ENCODE measurements at regions of chr12 and their contacts with region 1.

Region 1: DNA sequence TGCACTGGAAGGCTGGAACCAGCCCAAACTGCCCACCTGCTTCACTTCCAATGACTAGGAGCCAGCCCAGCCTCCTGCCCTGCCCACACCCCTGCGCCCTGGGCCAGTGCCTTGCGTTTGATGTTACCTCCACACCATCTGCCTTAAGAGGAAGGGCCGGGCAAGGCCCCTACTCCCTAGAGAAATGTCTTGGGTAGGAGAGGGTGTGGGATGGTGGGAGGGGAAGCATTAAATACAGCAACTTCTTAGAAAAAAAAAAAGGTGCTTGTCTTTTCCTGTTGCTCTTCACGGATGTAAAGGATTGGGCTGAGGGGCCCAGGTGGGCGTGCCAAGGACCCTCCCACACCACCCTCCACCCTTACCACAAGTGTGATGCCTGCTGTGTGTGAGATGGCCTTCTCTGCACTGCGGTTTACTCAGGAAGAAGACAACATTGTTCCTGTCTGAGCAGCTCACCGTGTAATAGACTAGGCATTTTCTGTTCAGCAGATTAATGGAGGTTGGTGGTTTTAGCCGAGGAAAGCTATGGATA is 99.9 kb downstream of the NINJ2 start:
- DNase-seq: peak in 8 of 9 donors; percentile 54 to 89 (median 85)
- ATAC-seq: peak; percentile 91
- H3K4me3 ChIP-seq: peak overlapping the region; percentile 49
- H3K4me3 Mint-ChIP-seq: peak overlapping the region; percentile 73 to 98 (median 85)
- H3K27ac ChIP-seq: peak overlapping the region; percentile 80
- H3K27ac Mint-ChIP-seq: peak overlapping the region; percentile 84 to 96 (median 94)
- H3K4me1 ChIP-seq: peaks cover 49 to 71% of the 10 kb centered on the region in 2 donors
- H3K4me1 Mint-ChIP-seq: peaks cover 60 to 98% (median 92%) of the 10 kb centered on the region in 7 donors
- H3K27me3 ChIP-seq: no peaks in the 10 kb centered on the region
- H3K27me3 Mint-ChIP-seq: no peaks in the 10 kb centered on the region

Region 2: DNA sequence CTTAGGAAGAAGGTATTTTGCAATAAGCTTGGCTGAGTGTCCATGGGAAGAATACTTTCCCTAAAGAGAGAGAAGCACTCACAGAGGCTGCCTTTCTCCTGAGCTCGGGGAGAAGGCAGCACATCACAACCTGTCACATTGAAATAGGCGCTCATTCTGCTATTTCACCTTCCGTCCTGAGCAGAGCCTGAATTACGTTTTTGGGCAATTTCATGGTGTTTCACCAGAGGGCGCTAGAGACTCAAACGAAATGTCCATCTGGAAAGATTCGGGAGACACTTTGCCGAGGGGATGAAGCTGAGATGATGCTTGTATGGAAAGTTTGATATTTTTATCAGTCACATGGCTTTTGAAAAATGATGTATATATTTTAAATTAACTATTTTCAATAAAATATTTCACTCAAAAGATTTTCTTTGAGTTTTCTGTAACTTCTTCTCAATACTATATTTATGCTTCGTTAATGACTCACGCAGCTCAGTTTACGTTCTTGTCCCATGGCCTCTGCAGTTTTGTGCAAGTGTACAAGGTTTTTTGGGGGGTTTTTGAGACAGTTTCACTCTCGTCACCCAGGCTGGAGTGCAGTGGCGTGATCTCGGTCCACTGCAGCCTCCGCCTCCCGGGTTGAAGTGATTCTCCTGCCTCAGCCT is 121.0 kb before region 1 on chr12:
- CTCF ChIA-PET with region 1: no interaction called
- POLR2A ChIA-PET with region 1: no interaction called
- intact Hi-C with region 1: no loop called
- DNase-seq: peak in 7 of 9 donors; percentile 24 to 46 (median 38)
- ATAC-seq: peak; percentile 45
- H3K4me3 ChIP-seq: no peak overlapping the region
- H3K4me3 Mint-ChIP-seq: no peak overlapping the region
- H3K27ac ChIP-seq: no peak overlapping the region
- H3K27ac Mint-ChIP-seq: no peak overlapping the region
- H3K4me1 ChIP-seq: no peaks in the 10 kb centered on the region
- H3K4me1 Mint-ChIP-seq: no peaks in the 10 kb centered on the region
- H3K27me3 ChIP-seq: no peaks in the 10 kb centered on the region
- H3K27me3 Mint-ChIP-seq: peaks cover 0 to 4% (median 0%) of the 10 kb centered on the region in 5 donors

Region 3: GRCh38 chr12:480831-481816 is 82.2 kb before region 1 on chr12:
- CTCF ChIA-PET with region 1: no interaction called
- POLR2A ChIA-PET with region 1: no interaction called
- intact Hi-C with region 1: no loop called
- DNase-seq: no peak
- ATAC-seq: no peak
- H3K4me3 ChIP-seq: no peak overlapping the region
- H3K4me3 Mint-ChIP-seq: no peak overlapping the region
- H3K27ac ChIP-seq: no peak overlapping the region
- H3K27ac Mint-ChIP-seq: no peak overlapping the region
- H3K4me1 ChIP-seq: no peaks in the 10 kb centered on the region
- H3K4me1 Mint-ChIP-seq: peaks cover 0 to 8% (median 0%) of the 10 kb centered on the region in 7 donors
- H3K27me3 ChIP-seq: no peaks in the 10 kb centered on the region
- H3K27me3 Mint-ChIP-seq: peaks cover 6 to 40% (median 20%) of the 10 kb centered on the region in 5 donors

Region 4: GRCh38 chr12:779745-780734 is 216.7 kb after region 1 on chr12:
- CTCF ChIA-PET with region 1: no interaction called
- POLR2A ChIA-PET with region 1: no interaction called
- intact Hi-C with region 1: no loop called
- DNase-seq: no peak
- ATAC-seq: no peak
- H3K4me3 ChIP-seq: no peak overlapping the region
- H3K4me3 Mint-ChIP-seq: peak overlapping the region; percentile 24 to 83 (median 72)
- H3K27ac ChIP-seq: no peak overlapping the region
- H3K27ac Mint-ChIP-seq: peak overlapping the region in 8 of 9 donors; percentile 32 to 79 (median 66)
- H3K4me1 ChIP-seq: peaks cover 23 to 49% of the 10 kb centered on the region in 2 donors
- H3K4me1 Mint-ChIP-seq: peaks cover 39 to 85% (median 78%) of the 10 kb centered on the region in 7 donors
- H3K27me3 ChIP-seq: no peaks in the 10 kb centered on the region
- H3K27me3 Mint-ChIP-seq: no peaks in the 10 kb centered on the region

Region 5: GRCh38 chr12:990661-991349 is 427.5 kb after region 1 on chr12 and contains the start of gene ERC1:
- CTCF ChIA-PET with region 1: no interaction called
- POLR2A ChIA-PET with region 1: no interaction called
- intact Hi-C with region 1: loop called in 1 of 2 experiments (anchors 5 kb)
- DNase-seq: peak; percentile 77 to 93 (median 87)
- ATAC-seq: peak; percentile 94
- H3K4me3 ChIP-seq: peak within 1 kb of the TSS; percentile 89
- H3K4me3 Mint-ChIP-seq: peak within 1 kb of the TSS; percentile 86 to 100 (median 97)
- H3K27ac ChIP-seq: peak within 1 kb of the TSS; percentile 87
- H3K27ac Mint-ChIP-seq: peak within 1 kb of the TSS; percentile 89 to 98 (median 96)
- H3K4me1 ChIP-seq: peaks cover 0 to 17% of the 10 kb centered on the region in 2 donors
- H3K4me1 Mint-ChIP-seq: peaks cover 34 to 55% (median 46%) of the 10 kb centered on the region in 7 donors
- H3K27me3 ChIP-seq: no peaks in the 10 kb centered on the region
- H3K27me3 Mint-ChIP-seq: no peaks in the 10 kb centered on the region
- total RNA-seq, gene ERC1: 48.6 to 62.0 (median 52.4) TPM

Region 6: GRCh38 chr12:1080520-1081223 is 517.4 kb after region 1 on chr12:
- CTCF ChIA-PET with region 1: no interaction called
- POLR2A ChIA-PET with region 1: no interaction called
- intact Hi-C with region 1: no loop called
- DNase-seq: no peak
- ATAC-seq: no peak
- H3K4me3 ChIP-seq: no peak overlapping the region
- H3K4me3 Mint-ChIP-seq: no peak overlapping the region
- H3K27ac ChIP-seq: no peak overlapping the region
- H3K27ac Mint-ChIP-seq: peak overlapping the region in 1 of 9 donors; percentile 15
- H3K4me1 ChIP-seq: no peaks in the 10 kb centered on the region
- H3K4me1 Mint-ChIP-seq: peaks cover 0 to 15% (median 4%) of the 10 kb centered on the region in 7 donors
- H3K27me3 ChIP-seq: no peaks in the 10 kb centered on the region
- H3K27me3 Mint-ChIP-seq: no peaks in the 10 kb centered on the region

Measured in naive thymus-derived CD4-positive, alpha-beta T cell (primary cell).